ENCODE measurements at regions of chr3 and their contacts with region 1.

Region 1: DNA sequence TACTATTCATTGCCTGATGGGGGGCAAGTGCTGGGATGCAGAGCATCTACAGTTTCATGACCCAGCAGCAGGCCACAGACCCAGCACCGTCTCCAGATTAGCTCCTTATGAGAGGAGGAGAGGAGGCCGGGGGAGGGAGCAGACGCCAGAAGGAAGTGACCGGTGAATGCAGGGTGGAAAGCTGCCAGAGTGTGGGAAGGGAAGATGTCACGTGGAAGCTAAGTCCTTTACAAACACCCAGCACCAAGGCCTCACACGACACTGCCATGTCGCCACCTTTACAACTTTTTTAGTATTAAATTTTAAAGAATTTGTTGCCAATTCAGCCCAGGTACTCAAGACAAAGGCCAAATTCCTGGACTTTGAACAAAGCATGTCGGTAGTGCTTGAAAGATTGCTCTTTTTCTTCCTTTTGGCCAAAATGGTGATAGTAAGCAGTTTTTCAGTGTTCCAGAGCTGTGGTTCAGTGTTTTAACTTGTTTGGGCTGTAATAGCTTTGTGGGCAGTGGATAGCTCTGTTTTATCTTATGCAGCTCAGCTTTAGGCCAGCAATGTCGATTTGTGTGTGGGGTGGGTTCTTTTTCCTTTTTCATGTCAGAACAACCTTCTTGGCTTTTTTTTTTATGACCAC is 58.2 kb downstream of the ZBTB38 start:
- DNase-seq: no peak
- H3K4me3 ChIP-seq: no peak overlapping the region
- H3K27ac ChIP-seq: peak overlapping the region; percentile 20
- H3K4me1 ChIP-seq: peaks cover 25% of the 10 kb centered on the region
- H3K27me3 ChIP-seq: no peaks in the 10 kb centered on the region
- CTCF ChIP-seq: no peak

Region 2: DNA sequence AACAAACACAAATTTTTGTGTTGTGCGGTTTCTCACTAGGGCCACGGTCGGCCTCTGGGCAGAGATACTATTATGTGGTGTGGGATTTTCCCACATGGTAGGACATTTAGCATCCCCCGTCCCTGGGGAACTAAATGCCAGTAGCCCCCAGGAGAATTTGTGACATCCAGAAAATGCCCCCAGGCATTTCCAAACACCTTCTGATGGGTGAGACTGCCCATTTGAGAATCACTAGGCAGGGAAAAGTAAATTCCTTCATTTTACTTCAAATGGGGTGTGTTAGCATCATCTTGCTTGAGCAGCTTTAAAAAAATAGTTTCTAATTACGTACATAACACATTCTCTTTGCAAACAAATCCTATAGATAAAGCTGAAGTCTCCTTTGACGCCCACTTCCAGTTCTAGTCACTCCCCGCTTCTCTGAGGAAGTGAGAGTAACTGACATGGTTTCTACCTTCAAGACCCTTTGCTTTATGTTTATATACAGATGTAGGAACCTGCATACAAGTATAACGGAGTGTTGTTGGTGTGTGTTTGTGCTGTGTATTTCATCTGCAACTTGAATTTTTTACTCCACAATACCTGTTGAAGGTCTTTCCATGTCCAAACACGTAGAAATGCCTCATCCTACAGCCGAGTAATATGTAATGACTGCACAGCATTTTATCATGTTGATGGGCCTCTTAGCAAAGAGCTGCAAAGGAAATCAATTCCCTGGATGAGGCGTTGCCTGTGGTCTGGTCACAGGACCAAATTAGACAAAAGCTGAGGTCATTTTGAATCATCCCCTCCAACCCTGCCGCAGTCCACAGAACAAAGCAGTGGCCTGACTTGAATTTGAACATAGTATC is 89.6 kb before region 1 on chr3:
- CTCF ChIA-PET with region 1: no interaction called
- dilution Hi-C with region 1: no loop called
- in situ Hi-C with region 1: no loop called
- intact Hi-C with region 1: no loop called
- DNase-seq: peak; percentile 92
- H3K4me3 ChIP-seq: no peak overlapping the region
- H3K27ac ChIP-seq: peak overlapping the region; percentile 57
- H3K4me1 ChIP-seq: peaks cover 19% of the 10 kb centered on the region
- H3K27me3 ChIP-seq: no peaks in the 10 kb centered on the region
- CTCF ChIP-seq: no peak

Region 3: DNA sequence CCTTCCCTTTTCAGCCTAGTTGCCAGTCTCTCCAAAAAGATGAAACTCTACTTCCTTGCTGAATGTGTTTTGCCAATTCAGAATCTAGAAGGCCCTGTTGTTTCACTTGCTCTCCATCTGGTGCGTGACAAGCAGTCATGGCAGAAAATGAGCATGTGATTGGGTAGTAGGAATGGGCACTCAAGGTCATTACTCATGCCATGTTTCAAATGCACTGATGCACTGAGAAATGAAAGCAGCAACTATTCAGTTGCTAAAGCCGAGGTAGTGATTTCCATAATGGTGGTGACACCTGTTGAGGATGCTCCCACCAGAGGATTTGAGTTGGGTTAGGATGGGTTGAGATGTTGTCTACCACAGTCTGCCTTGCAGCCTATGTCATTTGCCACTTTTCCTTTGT is 45.5 kb before region 1 on chr3:
- CTCF ChIA-PET with region 1: no interaction called
- dilution Hi-C with region 1: loop called (anchors 5 kb)
- in situ Hi-C with region 1: no loop called
- intact Hi-C with region 1: no loop called
- DNase-seq: no peak
- H3K4me3 ChIP-seq: no peak overlapping the region
- H3K27ac ChIP-seq: no peak overlapping the region
- H3K4me1 ChIP-seq: peaks cover 15% of the 10 kb centered on the region
- H3K27me3 ChIP-seq: no peaks in the 10 kb centered on the region
- CTCF ChIP-seq: no peak

Measured in mammary epithelial cell (primary cell).